Caco-2 (cell line): ENCODE measurements at regions of chr17 and their contacts with region 1.

Region 1: DNA sequence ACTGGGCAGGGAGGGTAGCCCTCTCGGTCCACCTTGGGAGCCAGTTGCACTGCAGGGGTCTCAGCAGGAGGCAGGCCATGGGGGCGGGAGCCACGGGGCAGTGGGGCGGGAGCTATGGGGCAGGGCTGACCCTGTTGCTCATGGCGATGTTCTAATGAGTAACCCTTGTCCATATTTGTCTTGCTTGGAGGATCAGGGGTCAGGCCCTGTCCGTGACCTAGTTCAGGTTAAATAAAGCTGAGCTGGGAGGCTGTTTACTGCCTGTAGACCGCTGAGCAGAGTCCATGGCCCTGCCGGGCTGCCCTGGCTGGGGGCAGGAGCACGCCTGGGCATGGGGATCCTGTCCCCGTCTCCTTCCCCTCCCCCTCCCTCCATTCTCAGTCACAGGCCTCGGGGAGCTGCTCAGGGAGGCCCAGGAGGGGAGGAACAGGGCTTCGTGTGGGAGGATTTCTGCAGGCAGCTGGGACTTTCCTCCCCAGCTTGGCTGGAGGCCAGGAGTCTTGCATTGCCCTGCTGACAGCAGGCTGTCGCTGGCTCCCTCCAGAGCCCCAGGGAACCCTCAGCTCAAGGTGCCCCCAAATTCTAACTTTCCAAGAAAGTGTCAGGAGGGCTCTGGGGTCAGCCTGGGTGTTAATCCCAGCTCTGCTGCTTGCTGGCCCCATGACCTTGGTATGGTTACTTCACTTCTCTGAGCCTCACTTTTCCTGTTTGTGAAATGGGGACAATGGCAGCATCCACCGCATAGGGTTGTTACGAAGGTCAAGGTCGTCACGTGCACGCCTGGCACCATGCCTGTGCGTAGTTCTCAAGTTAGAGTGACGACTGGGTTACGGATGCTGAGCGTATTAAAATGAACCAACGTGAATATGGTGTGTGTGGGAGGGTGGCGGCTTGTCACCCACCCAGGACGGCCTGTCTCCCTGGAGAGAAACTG is 6.1 kb upstream of the SERPINF2 start:
- DNase-seq: peak; percentile 82 to 88
- H3K4me3 ChIP-seq: no peak overlapping the region
- H3K4me3 Mint-ChIP-seq: peak overlapping the region; percentile 24
- H3K27ac Mint-ChIP-seq: peak overlapping the region; percentile 75
- H3K4me1 ChIP-seq: peaks cover 23% of the 10 kb centered on the region
- H3K4me1 Mint-ChIP-seq: peaks cover 18% of the 10 kb centered on the region
- H3K27me3 ChIP-seq: no peaks in the 10 kb centered on the region
- H3K27me3 Mint-ChIP-seq: no peaks in the 10 kb centered on the region
- CTCF ChIP-seq: no peak

Region 2: DNA sequence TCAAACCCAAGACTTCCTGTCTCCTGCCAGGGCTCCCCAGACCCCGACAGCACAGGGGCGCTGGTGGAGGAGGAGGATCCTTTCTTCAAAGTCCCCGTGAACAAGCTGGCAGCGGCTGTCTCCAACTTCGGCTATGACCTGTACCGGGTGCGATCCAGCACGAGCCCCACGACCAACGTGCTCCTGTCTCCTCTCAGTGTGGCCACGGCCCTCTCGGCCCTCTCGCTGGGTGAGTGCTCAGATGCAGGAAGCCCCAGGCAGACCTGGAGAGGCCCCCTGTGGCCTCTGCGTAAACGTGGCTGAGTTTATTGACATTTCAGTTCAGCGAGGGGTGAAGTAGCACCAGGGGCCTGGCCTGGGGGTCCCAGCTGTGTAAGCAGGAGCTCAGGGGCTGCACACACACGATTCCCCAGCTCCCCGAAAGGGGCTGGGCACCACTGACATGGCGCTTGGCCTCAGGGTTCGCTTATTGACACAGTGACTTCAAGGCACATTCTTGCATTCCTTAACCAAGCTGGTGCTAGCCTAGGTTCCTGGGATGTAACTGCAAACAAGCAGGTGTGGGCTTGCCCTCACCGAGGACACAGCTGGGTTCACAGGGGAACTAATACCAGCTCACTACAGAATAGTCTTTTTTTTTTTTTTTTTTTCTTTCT is 33.3 kb after region 1 on chr17:
- CTCF ChIA-PET with region 1: interaction called, 8 read pairs
- POLR2A ChIA-PET with region 1: interaction called, 19 read pairs
- intact Hi-C with region 1: loop called (anchors 1 kb)
- DNase-seq: peak; percentile 91 to 96
- H3K4me3 ChIP-seq: no peak overlapping the region
- H3K4me3 Mint-ChIP-seq: peak overlapping the region; percentile 47
- H3K27ac Mint-ChIP-seq: peak overlapping the region; percentile 98
- H3K4me1 ChIP-seq: peaks cover 32% of the 10 kb centered on the region
- H3K4me1 Mint-ChIP-seq: peaks cover 14% of the 10 kb centered on the region
- H3K27me3 ChIP-seq: no peaks in the 10 kb centered on the region
- H3K27me3 Mint-ChIP-seq: no peaks in the 10 kb centered on the region
- CTCF ChIP-seq: no peak

Region 3: DNA sequence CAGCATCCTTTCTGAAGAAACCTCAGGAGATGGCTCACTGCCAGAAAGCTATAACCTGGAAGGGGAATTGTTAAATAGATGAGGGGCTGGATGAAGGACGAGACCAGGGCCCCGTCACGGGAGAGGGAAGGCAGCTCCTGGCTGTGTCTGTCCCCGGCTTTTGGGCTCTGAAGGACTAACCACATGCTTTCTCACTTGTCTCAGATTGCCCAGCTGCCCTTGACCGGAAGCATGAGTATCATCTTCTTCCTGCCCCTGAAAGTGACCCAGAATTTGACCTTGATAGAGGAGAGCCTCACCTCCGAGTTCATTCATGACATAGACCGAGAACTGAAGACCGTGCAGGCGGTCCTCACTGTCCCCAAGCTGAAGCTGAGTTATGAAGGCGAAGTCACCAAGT is 39.7 kb after region 1 on chr17:
- CTCF ChIA-PET with region 1: no interaction called
- POLR2A ChIA-PET with region 1: interaction called, 12 read pairs
- intact Hi-C with region 1: no loop called
- DNase-seq: no peak
- H3K4me3 ChIP-seq: no peak overlapping the region
- H3K4me3 Mint-ChIP-seq: no peak overlapping the region
- H3K27ac Mint-ChIP-seq: no peak overlapping the region
- H3K4me1 ChIP-seq: peaks cover 9% of the 10 kb centered on the region
- H3K4me1 Mint-ChIP-seq: no peaks in the 10 kb centered on the region
- H3K27me3 ChIP-seq: no peaks in the 10 kb centered on the region
- H3K27me3 Mint-ChIP-seq: no peaks in the 10 kb centered on the region
- CTCF ChIP-seq: no peak